ENCODE measurements at regions of chr15 and their contacts with region 1.

Region 1: DNA sequence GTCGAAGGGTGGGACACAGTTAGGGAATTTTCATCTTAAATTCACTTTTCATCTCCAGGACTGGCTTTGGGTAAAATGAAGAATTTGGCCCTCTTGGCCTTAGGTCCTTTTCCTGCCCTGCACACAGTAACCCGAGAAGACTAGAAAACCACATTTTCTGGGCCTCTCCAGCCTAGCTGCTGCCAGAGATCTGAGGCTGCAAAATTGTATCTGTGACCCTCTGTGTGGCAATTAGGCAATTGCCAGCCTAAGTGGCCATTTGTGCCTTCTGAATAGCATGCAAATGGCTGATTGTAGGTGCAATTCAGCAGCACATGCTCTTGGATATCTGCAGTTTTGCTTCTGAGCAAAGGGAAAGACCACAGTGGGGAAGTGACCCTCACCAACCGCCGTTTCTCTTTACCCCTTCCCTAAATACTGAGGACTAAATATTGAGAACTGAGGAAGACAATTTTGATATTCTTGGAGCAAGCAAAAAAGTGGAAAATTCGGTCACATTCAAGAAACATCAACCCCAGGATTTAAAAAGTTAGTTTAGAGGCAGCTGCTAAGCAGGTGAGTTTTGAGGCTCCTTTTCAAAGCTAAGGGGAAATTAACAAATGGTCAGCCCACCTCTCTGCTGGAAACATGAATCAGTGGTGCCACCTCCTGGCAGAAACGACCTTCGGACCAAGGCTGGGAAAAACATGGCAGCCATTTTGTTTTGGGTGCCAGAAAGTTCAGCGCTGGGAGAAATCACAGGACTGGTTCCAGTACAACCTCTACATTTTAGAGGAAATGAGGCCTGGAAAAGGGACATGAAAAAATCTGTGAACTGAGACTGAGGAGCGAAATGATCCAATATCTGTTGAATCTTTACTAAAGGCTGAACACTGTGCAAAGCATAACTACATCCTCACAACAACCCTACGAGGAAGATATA is 56.6 kb upstream of the PRTG start:
- DNase-seq: no peak
- H3K4me3 ChIP-seq: no peak overlapping the region
- H3K27ac ChIP-seq: no peak overlapping the region
- H3K4me1 ChIP-seq: no peaks in the 10 kb centered on the region
- H3K27me3 ChIP-seq: no peaks in the 10 kb centered on the region
- CTCF ChIP-seq: peak in 2 of 4 experiments; percentile 24 to 34
- POLR2A ChIP-seq: no peak

Region 2: DNA sequence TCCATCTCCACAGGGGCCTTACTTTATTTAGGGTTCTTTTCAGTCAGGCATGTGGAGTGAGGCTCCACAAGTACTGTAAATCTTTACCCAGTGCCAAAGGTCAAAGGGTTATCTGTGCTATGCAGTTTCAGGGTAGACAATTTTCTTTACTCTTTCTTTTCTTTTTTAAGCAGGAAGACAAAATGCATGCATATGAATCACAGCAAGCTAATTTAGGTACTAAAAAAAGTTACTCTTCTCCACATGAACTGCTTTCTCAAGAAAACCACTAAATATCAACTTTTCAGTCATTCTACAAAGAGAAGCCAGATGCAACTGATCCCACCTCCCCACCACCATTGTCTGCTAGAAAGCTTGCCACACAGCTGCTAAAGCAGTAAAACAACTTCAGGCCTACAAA is 138.1 kb before region 1 on chr15:
- intact Hi-C with region 1: loop called (anchors 10 kb)
- DNase-seq: no peak
- H3K4me3 ChIP-seq: no peak overlapping the region
- H3K27ac ChIP-seq: no peak overlapping the region
- H3K4me1 ChIP-seq: no peaks in the 10 kb centered on the region
- H3K27me3 ChIP-seq: no peaks in the 10 kb centered on the region
- CTCF ChIP-seq: no peak
- POLR2A ChIP-seq: no peak

Measured in prostate gland (tissue), 2 donors.